OCI-LY7 (cell line): ENCODE measurements at regions of chr20 and their contacts with region 1.

Region 1: DNA sequence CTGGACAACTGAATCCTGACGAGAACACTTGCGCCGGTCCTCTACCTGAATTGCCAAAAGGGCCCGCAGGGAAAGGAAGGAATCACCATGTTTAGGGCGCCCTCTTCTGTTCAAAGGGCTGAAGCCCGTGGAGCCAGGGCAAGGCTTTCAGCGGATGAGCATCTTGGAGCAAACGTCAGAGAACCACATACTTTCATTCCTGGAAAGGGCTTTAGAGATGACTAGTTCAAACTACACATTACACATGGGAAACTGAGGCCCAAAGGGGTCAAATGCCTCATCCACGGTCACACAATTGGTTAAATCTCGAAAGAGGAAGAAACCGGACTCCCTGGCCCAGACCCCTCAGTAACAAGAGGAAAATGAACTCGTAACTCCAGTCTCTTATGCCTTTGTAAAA is 11.5 kb upstream of the ZNF133 start:
- DNase-seq: peak; percentile 64
- H3K4me3 ChIP-seq: no peak overlapping the region
- H3K27ac ChIP-seq: no peak overlapping the region
- H3K4me1 ChIP-seq: no peaks in the 10 kb centered on the region
- CTCF ChIP-seq: peak; percentile 93

Region 2: GRCh38 chr20:18066421-18067336 is 210.1 kb before region 1 on chr20:
- CTCF ChIA-PET with region 1: no interaction called
- POLR2A ChIA-PET with region 1: no interaction called
- intact Hi-C with region 1: loop called (anchors 10 kb)
- DNase-seq: peak; percentile 2
- H3K4me3 ChIP-seq: no peak overlapping the region
- H3K27ac ChIP-seq: no peak overlapping the region
- H3K4me1 ChIP-seq: no peaks in the 10 kb centered on the region
- CTCF ChIP-seq: peak; percentile 63